Activated naive CD4-positive, alpha-beta T cell treated with anti-CD3 and anti-CD28 coated beads for 36 hours (primary cell): ENCODE measurements at regions of chr22 and their contacts with region 1.

Region 1: GRCh38 chr22:25564320-25564978 is at the start of gene GRK3:
- DNase-seq: peak; percentile 76
- H3K4me3 Mint-ChIP-seq: peak within 1 kb of the TSS; percentile 85
- H3K27ac Mint-ChIP-seq: peak within 1 kb of the TSS; percentile 60
- H3K4me1 Mint-ChIP-seq: peaks cover 41% of the 10 kb centered on the region
- H3K27me3 Mint-ChIP-seq: peaks cover 4% of the 10 kb centered on the region
- total RNA-seq, gene GRK3: 8.3 to 8.9 TPM

Region 2: DNA sequence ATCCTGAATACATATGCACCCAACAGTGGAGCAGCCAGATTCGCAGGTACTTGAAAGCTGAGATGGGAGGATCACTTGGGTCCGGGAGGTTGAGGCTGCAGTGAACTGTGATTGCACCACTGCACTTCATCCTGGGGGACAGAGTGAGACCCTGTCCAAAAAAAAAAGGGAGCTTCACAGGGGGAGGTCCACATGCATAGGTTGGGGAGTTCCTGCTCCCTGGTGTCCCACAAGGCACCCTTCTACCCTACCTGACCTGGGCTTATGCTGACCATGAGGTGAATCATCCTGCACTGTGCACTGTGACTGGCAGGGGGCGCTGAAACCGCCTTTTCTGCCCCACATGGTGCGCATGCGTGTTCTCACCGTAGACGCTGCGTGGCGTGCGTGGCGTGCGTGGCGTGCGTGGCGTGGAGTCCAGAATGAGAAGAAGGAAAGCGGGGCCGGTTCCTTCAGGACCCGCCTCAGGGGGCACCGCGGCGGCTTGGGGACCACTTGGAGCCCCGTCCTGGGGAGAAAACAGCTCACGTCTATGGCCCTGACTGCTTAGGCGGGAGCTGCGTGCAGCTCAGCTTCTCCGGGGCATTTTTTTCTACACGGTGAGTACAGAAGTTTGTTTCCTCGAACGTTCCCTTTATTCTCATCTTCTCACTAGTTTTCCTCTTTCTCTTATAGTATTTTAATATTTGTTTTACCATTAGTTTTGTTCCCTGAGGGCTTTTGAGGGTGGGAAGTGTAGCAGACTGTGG is 116.6 kb before region 1 on chr22:
- CTCF ChIA-PET with region 1: no interaction called
- intact Hi-C with region 1: loop called (anchors 5 kb)
- DNase-seq: peak; percentile 94
- H3K4me3 Mint-ChIP-seq: peak overlapping the region; percentile 86
- H3K27ac Mint-ChIP-seq: peak overlapping the region; percentile 91
- H3K4me1 Mint-ChIP-seq: peaks cover 42% of the 10 kb centered on the region
- H3K27me3 Mint-ChIP-seq: no peaks in the 10 kb centered on the region

Region 3: GRCh38 chr22:25694196-25694907 is 129.9 kb after region 1 on chr22:
- CTCF ChIA-PET with region 1: no interaction called
- intact Hi-C with region 1: no loop called
- DNase-seq: no peak
- H3K4me3 Mint-ChIP-seq: no peak overlapping the region
- H3K27ac Mint-ChIP-seq: no peak overlapping the region
- H3K4me1 Mint-ChIP-seq: no peaks in the 10 kb centered on the region
- H3K27me3 Mint-ChIP-seq: no peaks in the 10 kb centered on the region

Region 4: DNA sequence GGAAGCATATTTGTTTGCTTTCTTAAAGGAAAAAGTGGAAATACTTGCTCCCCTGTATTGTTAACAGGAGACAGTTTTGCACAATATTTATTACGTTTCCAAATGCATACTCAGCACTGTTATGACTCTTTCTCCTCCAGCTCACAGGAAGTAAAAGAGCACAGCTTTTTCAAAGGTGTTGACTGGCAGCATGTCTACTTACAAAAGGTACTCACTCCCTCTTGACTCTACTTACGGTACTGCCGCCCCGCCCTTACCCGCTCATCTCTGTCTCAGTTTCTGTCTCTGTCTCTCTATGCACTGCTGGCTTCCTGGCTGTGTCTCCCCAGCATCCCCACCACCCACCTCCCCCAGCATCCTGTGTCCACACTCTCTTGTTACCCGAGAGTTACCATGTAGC is 145.3 kb after region 1 on chr22:
- CTCF ChIA-PET with region 1: no interaction called
- intact Hi-C with region 1: loop called (anchors 2 kb)
- DNase-seq: peak; percentile 83
- H3K4me3 Mint-ChIP-seq: no peak overlapping the region
- H3K27ac Mint-ChIP-seq: peak overlapping the region; percentile 48
- H3K4me1 Mint-ChIP-seq: peaks cover 16% of the 10 kb centered on the region
- H3K27me3 Mint-ChIP-seq: no peaks in the 10 kb centered on the region

Region 5: DNA sequence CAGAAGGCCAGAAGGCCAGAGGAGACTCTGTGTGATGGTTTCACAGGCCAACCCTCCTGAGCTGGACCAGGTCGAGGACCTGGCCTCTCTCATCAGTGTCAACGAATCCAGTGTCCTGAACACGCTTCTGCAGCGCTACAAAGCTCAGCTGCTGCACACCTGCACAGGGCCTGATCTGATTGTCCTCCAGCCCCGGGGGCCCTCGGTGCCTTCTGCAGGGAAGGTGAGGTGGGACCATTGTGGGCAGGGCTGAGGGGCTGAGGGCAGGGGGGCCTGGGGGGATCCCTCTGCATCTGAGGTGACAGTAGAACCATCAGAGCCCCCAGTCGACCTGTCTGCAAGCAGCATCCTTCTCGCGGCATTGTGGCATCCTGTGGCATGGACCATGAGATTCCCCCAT is 207.8 kb after region 1 on chr22:
- CTCF ChIA-PET with region 1: interaction called, 6 read pairs
- intact Hi-C with region 1: loop called (anchors 2 kb)
- DNase-seq: no peak
- H3K4me3 Mint-ChIP-seq: no peak overlapping the region
- H3K27ac Mint-ChIP-seq: no peak overlapping the region
- H3K4me1 Mint-ChIP-seq: peaks cover 14% of the 10 kb centered on the region
- H3K27me3 Mint-ChIP-seq: peaks cover 2% of the 10 kb centered on the region